Mucosa of descending colon (tissue), 3 donors: ENCODE measurements at regions of chr11 and their contacts with region 1.

Region 1: GRCh38 chr11:112219476-112220232 is 6.6 kb upstream of the PTS start:
- DNase-seq: peak in 1 of 3 donors; percentile 65
- ATAC-seq: peak; percentile 97
- H3K4me3 ChIP-seq: no peak overlapping the region
- H3K4me1 ChIP-seq: no peaks in the 10 kb centered on the region
- CTCF ChIP-seq: peak; percentile 38

Region 2: DNA sequence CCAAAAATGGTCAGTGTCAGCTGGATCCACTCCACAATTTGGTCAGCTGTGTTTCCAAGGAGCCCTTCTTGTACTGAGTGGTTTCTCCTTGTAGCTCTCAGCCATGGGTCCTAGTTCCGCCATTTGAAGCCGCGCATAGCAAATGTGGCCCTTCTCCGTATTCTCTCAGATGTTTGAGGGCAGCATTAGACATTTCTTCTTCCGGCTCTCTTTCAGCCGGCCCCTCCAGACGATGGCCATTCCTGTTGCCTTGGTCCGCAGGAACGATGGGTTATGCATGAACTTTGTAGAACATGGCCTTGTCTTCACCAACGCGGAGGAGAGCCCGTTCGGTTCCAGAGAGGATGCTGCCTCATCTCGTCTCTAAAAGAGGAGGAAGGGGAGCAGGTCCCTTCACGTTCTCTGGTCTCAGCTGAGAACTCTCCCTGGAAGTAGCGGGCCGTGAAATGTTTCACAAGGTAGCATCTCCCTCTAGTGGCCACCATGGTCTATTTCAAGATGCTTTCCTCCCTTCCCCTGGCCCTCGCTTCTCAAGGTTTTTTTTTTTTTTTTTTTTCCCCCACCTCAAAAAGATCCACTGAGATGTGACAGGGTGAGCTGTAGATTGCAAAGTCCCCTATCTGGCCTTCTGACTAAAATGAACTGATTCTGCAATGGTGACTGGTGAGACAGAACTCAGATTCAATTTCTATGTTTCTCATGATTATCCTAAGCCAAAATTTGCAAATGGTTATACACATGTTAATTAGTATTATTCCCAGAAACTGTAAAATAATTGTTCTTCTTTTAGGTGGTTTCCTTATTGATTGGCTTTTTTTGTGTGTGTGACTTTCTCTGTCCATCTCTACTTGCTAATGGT is 60.8 kb after region 1 on chr11:
- intact Hi-C with region 1: loop called (anchors 2 to 5 kb)
- DNase-seq: peak in 2 of 3 donors; percentile 54 to 82
- ATAC-seq: peak; percentile 88
- H3K4me3 ChIP-seq: no peak overlapping the region
- H3K4me1 ChIP-seq: peaks cover 6% of the 10 kb centered on the region
- CTCF ChIP-seq: peak; percentile 58